CD14-positive monocyte (primary cell): ENCODE measurements at regions of chr16 and their contacts with region 1.

Region 1: DNA sequence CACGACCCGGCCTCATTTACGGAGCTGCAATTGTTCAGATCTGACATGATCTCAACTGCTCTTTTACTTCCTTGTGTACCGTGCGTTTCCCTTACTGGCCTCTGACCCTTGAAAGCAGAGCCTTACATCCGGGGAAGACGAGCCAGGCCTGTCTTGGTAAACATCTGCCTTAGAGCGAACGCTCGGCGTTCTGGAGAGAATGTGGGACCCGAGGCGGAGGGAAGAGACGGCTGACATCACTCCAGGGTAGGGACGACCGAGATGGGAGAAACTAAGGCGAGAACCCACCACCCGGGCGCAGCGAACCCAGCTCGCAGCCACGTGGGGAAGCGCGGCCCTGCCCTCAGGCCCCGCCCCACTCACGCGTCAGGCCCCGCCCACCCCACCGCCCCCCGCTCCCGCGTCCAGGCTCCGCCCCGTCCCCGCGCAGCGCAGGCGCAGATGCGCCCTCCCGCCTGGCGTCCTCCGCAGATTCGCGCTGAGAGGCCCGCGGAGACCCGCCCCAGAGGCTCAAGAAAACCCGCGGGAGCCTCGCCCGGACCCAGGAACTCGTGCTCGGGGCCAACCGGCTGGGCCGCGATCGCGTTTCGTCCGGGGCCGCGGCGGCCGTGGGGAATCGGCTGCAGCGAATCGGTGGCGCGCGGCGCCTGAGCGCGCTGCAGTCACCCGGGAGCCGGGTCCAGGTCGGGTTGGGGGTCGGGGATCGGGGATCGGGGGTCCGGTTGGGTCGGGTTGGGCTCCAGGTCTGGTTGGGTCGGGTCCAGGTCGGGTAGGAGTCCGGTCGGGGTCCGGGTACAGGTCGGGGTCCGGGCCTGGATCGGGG is at the start of gene TELO2:
- DNase-seq: peak; percentile 73 to 82 (median 81)
- H3K4me3 ChIP-seq: peak within 1 kb of the TSS; percentile 81 to 90 (median 87)
- H3K4me3 Mint-ChIP-seq: peak within 1 kb of the TSS; percentile 92 to 94
- H3K27ac ChIP-seq: peak within 1 kb of the TSS; percentile 78 to 96
- H3K27ac Mint-ChIP-seq: peak within 1 kb of the TSS; percentile 94 to 99 (median 98)
- H3K4me1 ChIP-seq: peaks cover 32 to 37% of the 10 kb centered on the region in 2 donors
- H3K4me1 Mint-ChIP-seq: peaks cover 29% of the 10 kb centered on the region
- H3K27me3 ChIP-seq: no peaks in the 10 kb centered on the region
- H3K27me3 Mint-ChIP-seq: peaks cover 0 to 2% (median 0%) of the 10 kb centered on the region in 3 donors
- CTCF ChIP-seq: no peak
- polyA plus RNA-seq, gene TELO2: 7.3 to 58.1 (median 11.4) TPM

Region 2: GRCh38 chr16:1420111-1420540 is 73.0 kb before region 1 on chr16:
- intact Hi-C with region 1: loop called in 1 of 2 experiments (anchors 5 kb)
- DNase-seq: no peak
- H3K4me3 ChIP-seq: peak overlapping the region; percentile 64 to 96 (median 69)
- H3K4me3 Mint-ChIP-seq: peak overlapping the region; percentile 86 to 93
- H3K27ac ChIP-seq: peak overlapping the region; percentile 72 to 87
- H3K27ac Mint-ChIP-seq: peak overlapping the region; percentile 72 to 96 (median 94)
- H3K4me1 ChIP-seq: peaks cover 18 to 21% of the 10 kb centered on the region in 2 donors
- H3K4me1 Mint-ChIP-seq: peaks cover 20% of the 10 kb centered on the region
- H3K27me3 ChIP-seq: no peaks in the 10 kb centered on the region
- H3K27me3 Mint-ChIP-seq: no peaks in the 10 kb centered on the region
- CTCF ChIP-seq: no peak